ENCODE measurements at regions of chr17 and their contacts with region 1.

Region 1: DNA sequence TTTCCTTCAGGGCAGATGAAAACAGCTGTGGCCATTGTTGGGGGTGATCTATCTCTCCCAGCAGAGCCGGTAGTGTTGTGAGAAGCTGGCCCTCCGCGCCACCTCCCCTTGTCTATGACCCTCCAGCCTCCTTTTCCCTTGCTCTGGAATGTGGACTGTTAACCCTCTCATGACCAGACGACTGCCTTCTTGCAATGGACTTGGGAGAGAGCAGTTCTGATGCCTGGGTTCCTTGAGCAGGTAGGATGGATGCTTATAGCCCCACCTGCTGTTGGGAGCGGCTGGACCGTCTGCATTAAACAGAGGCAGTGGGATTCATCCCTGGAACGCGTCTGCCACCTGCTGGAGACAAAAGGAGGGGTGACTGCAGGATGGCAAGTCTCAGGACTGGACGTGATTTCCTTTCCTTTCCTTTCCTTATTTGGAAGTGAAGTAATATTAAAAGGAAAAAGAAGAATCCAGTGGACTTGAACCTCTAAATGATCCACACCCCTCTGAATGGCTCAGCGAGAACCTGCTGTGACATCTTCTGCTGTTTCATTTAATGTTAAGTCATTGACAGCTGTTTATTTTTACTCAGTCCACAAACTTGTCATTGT is 1.8 kb upstream of the SOST start:
- DNase-seq: peak; percentile 87
- ATAC-seq: peak; percentile 98
- H3K4me3 ChIP-seq: no peak overlapping the region
- H3K4me3 Mint-ChIP-seq: no peak overlapping the region
- H3K27ac ChIP-seq: no peak overlapping the region
- H3K27ac Mint-ChIP-seq: no peak overlapping the region
- H3K4me1 ChIP-seq: peaks cover 0 to 3% of the 10 kb centered on the region in 2 donors
- H3K4me1 Mint-ChIP-seq: no peaks in the 10 kb centered on the region
- H3K27me3 ChIP-seq: peaks cover 0 to 22% (median 6%) of the 10 kb centered on the region in 4 experiments
- H3K27me3 Mint-ChIP-seq: peaks cover 24% of the 10 kb centered on the region
- CTCF ChIP-seq: peak; percentile 96

Region 2: DNA sequence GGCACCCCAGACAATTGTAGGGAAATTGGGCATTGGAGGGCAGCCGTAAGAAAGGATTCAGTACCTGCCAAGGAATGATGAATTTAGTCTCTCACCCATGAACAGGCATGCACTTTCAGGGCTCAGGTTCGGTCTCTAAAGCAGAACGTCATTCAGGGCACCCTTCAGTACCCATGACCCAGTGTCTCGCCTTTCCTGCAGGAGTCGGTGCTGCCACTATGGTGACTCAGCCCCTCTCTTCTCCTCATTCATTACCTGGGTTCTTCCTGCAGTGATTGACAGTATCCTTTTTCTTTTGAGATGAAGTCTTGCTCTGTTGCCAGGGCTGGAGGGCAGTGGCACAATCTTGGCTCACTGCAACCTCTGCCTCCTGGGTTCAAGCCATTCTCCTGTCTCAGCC is 10.2 kb before region 1 on chr17:
- CTCF ChIA-PET with region 1: interaction called, 16 read pairs
- POLR2A ChIA-PET with region 1: no interaction called
- intact Hi-C with region 1: no loop called
- DNase-seq: no peak
- ATAC-seq: no peak
- H3K4me3 ChIP-seq: no peak overlapping the region
- H3K4me3 Mint-ChIP-seq: no peak overlapping the region
- H3K27ac ChIP-seq: no peak overlapping the region
- H3K27ac Mint-ChIP-seq: no peak overlapping the region
- H3K4me1 ChIP-seq: peaks cover under 1 to 6% of the 10 kb centered on the region in 2 donors
- H3K4me1 Mint-ChIP-seq: peaks cover 6% of the 10 kb centered on the region
- H3K27me3 ChIP-seq: peaks cover 0 to 24% (median 8%) of the 10 kb centered on the region in 4 experiments
- H3K27me3 Mint-ChIP-seq: peaks cover 61% of the 10 kb centered on the region
- CTCF ChIP-seq: no peak